Caco-2 (cell line): ENCODE measurements at regions of chr6 and their contacts with region 1.

Region 1: DNA sequence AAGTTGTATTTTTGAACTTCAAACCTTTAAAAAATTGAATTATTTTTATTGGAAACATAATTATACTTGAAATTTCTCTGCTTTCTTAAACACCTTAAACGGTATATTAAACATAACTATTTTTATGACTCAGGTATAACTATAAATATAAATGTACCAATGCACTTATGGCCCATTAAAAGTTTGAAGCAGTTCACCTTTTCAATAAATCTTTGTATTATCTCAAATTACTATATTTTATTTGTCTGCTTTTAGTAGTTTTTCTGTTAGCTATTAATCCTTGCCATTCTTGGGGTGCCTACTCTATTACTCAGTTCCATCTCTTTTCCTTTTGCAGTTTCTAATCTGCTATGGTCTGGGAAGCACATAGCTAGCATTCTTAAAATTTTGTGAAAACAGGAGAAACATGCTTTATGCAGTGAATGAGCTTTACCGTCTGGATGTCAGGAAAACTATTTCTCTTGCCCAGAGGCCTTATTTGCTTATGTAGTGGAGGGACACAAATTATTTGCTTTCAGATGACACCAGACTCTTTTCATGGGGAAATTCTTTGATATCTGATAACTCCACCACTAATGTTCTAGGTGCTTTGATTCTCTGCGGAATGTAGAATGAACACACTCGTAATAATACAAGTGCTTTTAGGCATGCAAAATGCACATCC is 378.9 kb upstream of the CITED2 start:
- DNase-seq: peak; percentile 38 to 56
- H3K4me3 ChIP-seq: no peak overlapping the region
- H3K4me3 Mint-ChIP-seq: no peak overlapping the region
- H3K27ac Mint-ChIP-seq: peak overlapping the region; percentile 77
- H3K4me1 ChIP-seq: peaks cover 77% of the 10 kb centered on the region
- H3K4me1 Mint-ChIP-seq: peaks cover 58% of the 10 kb centered on the region
- H3K27me3 ChIP-seq: no peaks in the 10 kb centered on the region
- H3K27me3 Mint-ChIP-seq: no peaks in the 10 kb centered on the region
- CTCF ChIP-seq: no peak

Region 2: GRCh38 chr6:139540276-139540675 is 213.1 kb before region 1 on chr6:
- CTCF ChIA-PET with region 1: no interaction called
- POLR2A ChIA-PET with region 1: no interaction called
- intact Hi-C with region 1: loop called (anchors 2 kb)
- DNase-seq: no peak
- H3K4me3 ChIP-seq: no peak overlapping the region
- H3K4me3 Mint-ChIP-seq: peak overlapping the region; percentile 57
- H3K27ac Mint-ChIP-seq: peak overlapping the region; percentile 68
- H3K4me1 ChIP-seq: peaks cover 45% of the 10 kb centered on the region
- H3K4me1 Mint-ChIP-seq: peaks cover 29% of the 10 kb centered on the region
- H3K27me3 ChIP-seq: no peaks in the 10 kb centered on the region
- H3K27me3 Mint-ChIP-seq: no peaks in the 10 kb centered on the region
- CTCF ChIP-seq: no peak

Region 3: DNA sequence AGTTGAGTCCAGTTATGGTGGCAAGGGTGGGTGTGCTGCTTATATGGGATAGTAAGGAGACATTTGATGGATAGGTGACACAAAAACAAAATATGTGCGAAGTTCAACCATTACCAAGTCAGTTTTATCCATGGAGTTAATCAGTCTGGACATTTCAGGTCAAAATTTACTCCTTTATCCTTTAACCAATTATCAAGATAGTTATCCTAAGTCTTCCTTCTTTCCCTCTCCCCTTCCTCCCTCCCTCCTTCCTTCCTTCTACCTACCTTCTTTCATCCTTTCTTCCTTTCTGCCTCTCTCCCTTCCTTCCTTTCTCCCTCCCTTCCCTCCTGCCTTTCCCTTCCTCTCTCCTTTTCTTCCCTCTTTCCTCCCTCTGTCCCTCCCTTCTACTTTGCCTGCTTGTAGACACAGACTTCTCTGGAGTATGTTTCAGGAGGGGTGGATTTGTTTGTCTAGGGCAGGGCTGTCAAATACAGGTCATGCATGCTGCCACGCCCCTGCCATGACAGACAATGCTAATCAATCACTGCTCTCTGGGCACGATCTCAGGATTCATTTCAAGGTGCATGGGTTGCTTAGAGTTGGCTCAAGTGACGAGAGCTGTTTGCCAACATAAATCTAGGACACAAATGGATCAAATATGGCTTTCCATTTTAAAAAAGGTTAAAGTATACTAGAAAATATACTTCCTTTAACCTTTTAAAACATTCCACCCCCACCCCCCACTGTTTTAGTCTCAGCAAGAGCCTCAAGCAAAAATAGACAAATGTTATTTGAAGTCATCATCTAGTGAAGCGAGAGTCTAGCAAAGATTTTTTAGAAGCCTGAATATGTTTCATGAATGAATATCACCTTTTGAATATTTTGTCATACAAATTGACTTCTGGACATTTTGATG is 97.3 kb before region 1 on chr6:
- CTCF ChIA-PET with region 1: no interaction called
- POLR2A ChIA-PET with region 1: no interaction called
- intact Hi-C with region 1: loop called (anchors 1 kb)
- DNase-seq: peak; percentile 81 to 90
- H3K4me3 ChIP-seq: no peak overlapping the region
- H3K4me3 Mint-ChIP-seq: peak overlapping the region; percentile 60
- H3K27ac Mint-ChIP-seq: peak overlapping the region; percentile 88
- H3K4me1 ChIP-seq: peaks cover 46% of the 10 kb centered on the region
- H3K4me1 Mint-ChIP-seq: peaks cover 33% of the 10 kb centered on the region
- H3K27me3 ChIP-seq: no peaks in the 10 kb centered on the region
- H3K27me3 Mint-ChIP-seq: no peaks in the 10 kb centered on the region
- CTCF ChIP-seq: no peak

Region 4: GRCh38 chr6:139713900-139714514 is 39.3 kb before region 1 on chr6:
- CTCF ChIA-PET with region 1: no interaction called
- POLR2A ChIA-PET with region 1: no interaction called
- intact Hi-C with region 1: loop called (anchors 1 kb)
- DNase-seq: peak in 1 of 2 experiments; percentile 30
- H3K4me3 ChIP-seq: no peak overlapping the region
- H3K4me3 Mint-ChIP-seq: no peak overlapping the region
- H3K27ac Mint-ChIP-seq: peak overlapping the region; percentile 4
- H3K4me1 ChIP-seq: peaks cover 36% of the 10 kb centered on the region
- H3K4me1 Mint-ChIP-seq: peaks cover 27% of the 10 kb centered on the region
- H3K27me3 ChIP-seq: no peaks in the 10 kb centered on the region
- H3K27me3 Mint-ChIP-seq: no peaks in the 10 kb centered on the region
- CTCF ChIP-seq: no peak

Region 5: DNA sequence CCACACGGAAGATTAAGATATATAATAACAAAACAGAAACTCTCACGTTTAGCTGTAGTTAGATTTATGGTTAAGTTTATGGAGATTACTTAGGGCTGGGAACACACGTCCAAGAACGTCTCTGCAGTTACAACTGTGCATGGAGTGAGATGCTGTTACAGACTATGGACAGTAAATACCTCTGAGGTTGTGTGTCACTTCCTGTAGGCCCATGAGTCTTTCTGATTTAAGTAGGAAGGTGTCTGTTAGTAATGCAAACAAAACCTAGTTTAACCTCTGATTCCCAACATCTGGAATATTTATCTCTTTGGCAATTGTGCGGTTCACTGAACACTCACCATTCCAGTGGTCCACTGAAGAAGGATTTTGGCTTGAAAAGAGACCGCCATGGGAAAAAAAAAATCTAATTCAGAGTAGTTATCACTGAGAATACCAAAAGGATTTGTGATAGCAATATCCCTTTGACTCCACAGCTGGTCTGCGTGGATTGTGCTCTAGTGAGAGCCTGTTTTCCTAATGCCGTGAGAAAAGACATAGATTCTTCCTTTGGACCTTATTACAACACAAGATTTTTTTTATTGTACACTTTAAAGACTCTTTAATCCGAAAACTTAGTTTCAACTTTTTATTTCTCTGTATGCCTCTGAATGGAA is 99.3 kb after region 1 on chr6:
- CTCF ChIA-PET with region 1: no interaction called
- POLR2A ChIA-PET with region 1: no interaction called
- intact Hi-C with region 1: loop called (anchors 2 kb)
- DNase-seq: no peak
- H3K4me3 ChIP-seq: no peak overlapping the region
- H3K4me3 Mint-ChIP-seq: no peak overlapping the region
- H3K27ac Mint-ChIP-seq: no peak overlapping the region
- H3K4me1 ChIP-seq: peaks cover 39% of the 10 kb centered on the region
- H3K4me1 Mint-ChIP-seq: peaks cover 32% of the 10 kb centered on the region
- H3K27me3 ChIP-seq: no peaks in the 10 kb centered on the region
- H3K27me3 Mint-ChIP-seq: no peaks in the 10 kb centered on the region
- CTCF ChIP-seq: no peak